CD4-positive, alpha-beta T cell (primary cell): ENCODE measurements at regions of chr21 and their contacts with region 1.

Region 1: GRCh38 chr21:15729674-15730483 is at the start of gene USP25:
- DNase-seq: peak; percentile 81 to 94 (median 89)
- ATAC-seq: peak; percentile 81
- H3K4me3 ChIP-seq: peak within 1 kb of the TSS; percentile 77
- H3K4me3 Mint-ChIP-seq: peak within 1 kb of the TSS; percentile 98
- H3K27ac ChIP-seq: peak within 1 kb of the TSS; percentile 50 to 71
- H3K27ac Mint-ChIP-seq: peak within 1 kb of the TSS; percentile 85
- H3K4me1 ChIP-seq: peaks cover 20% of the 10 kb centered on the region
- H3K4me1 Mint-ChIP-seq: peaks cover 39% of the 10 kb centered on the region
- H3K27me3 ChIP-seq: no peaks in the 10 kb centered on the region
- H3K27me3 Mint-ChIP-seq: peaks cover 4% of the 10 kb centered on the region
- CTCF ChIP-seq: no peak
- total RNA-seq, gene USP25: 45.0 to 49.2 TPM

Region 2: DNA sequence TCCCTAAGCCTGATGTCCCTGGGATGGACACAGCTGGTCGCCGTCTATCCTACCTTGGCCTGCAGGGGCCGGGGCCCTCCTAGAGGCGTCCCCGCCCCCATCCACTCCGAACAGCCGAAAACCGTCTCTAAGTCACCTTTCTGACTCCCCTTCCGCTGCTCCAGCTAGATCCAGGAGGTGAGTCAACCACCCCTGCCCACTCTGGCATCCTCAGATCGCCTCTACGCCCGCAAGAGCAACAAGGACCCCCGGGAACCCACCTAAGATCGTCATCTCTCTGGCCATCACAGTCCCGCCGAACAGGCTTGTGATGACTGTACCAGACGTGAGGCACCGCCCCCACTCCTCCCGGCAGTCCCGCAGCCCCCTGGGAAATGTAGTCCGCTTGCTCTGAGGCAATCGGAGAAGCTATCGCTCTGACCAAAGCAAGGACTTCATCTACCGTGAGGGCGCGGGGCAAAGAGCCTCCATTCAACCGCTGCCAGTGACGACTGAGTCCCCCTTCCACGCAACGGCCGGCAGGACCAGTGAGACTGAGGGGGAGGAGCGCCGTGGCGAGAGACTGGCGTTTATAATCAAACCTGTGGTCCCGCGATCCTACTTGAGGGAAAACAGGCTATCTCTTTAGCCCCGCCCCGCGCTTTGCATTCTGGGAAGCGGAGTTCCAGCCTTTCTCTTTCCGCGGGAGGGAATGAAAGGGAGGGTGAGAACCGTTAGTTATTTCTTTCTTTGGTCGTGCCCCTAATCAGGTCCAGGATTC is 1346.9 kb before region 1 on chr21 and contains the start of gene HSPA13:
- CTCF ChIA-PET with region 1: interaction called, 3 read pairs
- POLR2A ChIA-PET with region 1: interaction called, 6 read pairs
- intact Hi-C with region 1: loop called (anchors 5 kb)
- DNase-seq: peak; percentile 95 to 100 (median 98)
- ATAC-seq: peak; percentile 93
- H3K4me3 ChIP-seq: peak within 1 kb of the TSS; percentile 80
- H3K4me3 Mint-ChIP-seq: peak within 1 kb of the TSS; percentile 96
- H3K27ac ChIP-seq: peak within 1 kb of the TSS; percentile 86
- H3K27ac Mint-ChIP-seq: peak within 1 kb of the TSS; percentile 97
- H3K4me1 ChIP-seq: peaks cover 17% of the 10 kb centered on the region
- H3K4me1 Mint-ChIP-seq: peaks cover 44% of the 10 kb centered on the region
- H3K27me3 ChIP-seq: no peaks in the 10 kb centered on the region
- H3K27me3 Mint-ChIP-seq: no peaks in the 10 kb centered on the region
- CTCF ChIP-seq: no peak
- total RNA-seq, gene HSPA13: 39.6 to 41.4 TPM

Region 3: DNA sequence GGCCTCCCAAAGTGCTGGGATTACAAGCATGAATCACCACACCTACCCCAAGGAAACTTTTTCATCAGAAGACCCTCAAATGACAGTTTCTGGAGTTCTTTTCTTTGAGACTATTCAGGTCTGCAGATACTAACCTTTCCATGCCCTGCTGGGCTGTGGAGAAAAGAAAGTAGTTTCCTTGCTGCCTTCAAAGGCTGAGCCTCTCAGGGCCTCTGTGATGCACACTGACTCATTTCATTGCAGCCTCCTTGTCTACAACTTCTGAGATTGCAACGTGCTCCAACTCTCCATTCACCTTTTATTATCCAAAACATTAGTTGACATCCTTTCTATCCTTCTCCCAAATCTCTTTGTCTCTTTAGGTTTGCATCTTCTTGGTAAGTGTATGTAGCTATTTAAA is 1174.9 kb before region 1 on chr21:
- CTCF ChIA-PET with region 1: no interaction called
- POLR2A ChIA-PET with region 1: no interaction called
- intact Hi-C with region 1: loop called in 1 of 2 experiments (anchors 10 kb)
- DNase-seq: peak in 5 of 14 experiments; percentile 3 to 57 (median 28)
- ATAC-seq: no peak
- H3K4me3 ChIP-seq: no peak overlapping the region
- H3K4me3 Mint-ChIP-seq: no peak overlapping the region
- H3K27ac ChIP-seq: no peak overlapping the region
- H3K27ac Mint-ChIP-seq: peak overlapping the region; percentile 5
- H3K4me1 ChIP-seq: peaks cover 11% of the 10 kb centered on the region
- H3K4me1 Mint-ChIP-seq: peaks cover 41% of the 10 kb centered on the region
- H3K27me3 ChIP-seq: no peaks in the 10 kb centered on the region
- H3K27me3 Mint-ChIP-seq: no peaks in the 10 kb centered on the region
- CTCF ChIP-seq: no peak

Region 4: GRCh38 chr21:15064576-15065391 is 665.1 kb before region 1 on chr21 and contains the start of gene NRIP1:
- CTCF ChIA-PET with region 1: no interaction called
- POLR2A ChIA-PET with region 1: interaction called, 6 read pairs
- intact Hi-C with region 1: loop called in 1 of 2 experiments (anchors 5 kb)
- DNase-seq: peak; percentile 72 to 93 (median 82)
- ATAC-seq: peak; percentile 76
- H3K4me3 ChIP-seq: peak within 1 kb of the TSS; percentile 91
- H3K4me3 Mint-ChIP-seq: peak within 1 kb of the TSS; percentile 97
- H3K27ac ChIP-seq: peak within 1 kb of the TSS; percentile 79 to 84
- H3K27ac Mint-ChIP-seq: peak within 1 kb of the TSS; percentile 98
- H3K4me1 ChIP-seq: peaks cover 13% of the 10 kb centered on the region
- H3K4me1 Mint-ChIP-seq: peaks cover 50% of the 10 kb centered on the region
- H3K27me3 ChIP-seq: no peaks in the 10 kb centered on the region
- H3K27me3 Mint-ChIP-seq: peaks cover 5% of the 10 kb centered on the region
- CTCF ChIP-seq: no peak
- total RNA-seq, gene NRIP1: 41.6 to 50.1 TPM

Region 5: DNA sequence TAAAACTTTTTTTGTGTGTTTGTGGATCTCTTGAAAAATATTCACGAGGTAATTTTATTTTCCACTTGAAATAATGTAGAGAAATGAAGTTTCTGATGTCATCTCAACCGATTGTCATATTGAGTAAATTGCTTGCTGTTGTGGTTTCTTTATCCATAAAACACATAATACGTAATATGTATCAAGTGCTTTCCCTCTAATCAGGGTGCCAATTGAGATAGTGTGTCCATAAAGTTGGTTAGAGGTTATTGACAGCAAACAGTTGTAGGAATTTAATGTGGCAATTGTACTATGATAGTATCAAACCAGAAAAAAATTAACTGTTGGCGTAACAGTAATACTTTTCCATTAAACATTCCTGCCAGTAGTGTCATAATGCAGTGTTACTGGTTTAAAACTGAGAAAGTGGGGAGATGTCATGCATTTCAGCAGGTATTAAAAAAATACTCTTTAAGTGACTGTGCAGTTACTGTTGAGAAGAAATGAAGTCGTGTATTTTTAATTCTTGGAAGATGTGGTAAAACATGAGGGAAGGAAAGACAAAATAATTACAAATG is 38.2 kb after region 1 on chr21:
- CTCF ChIA-PET with region 1: no interaction called
- POLR2A ChIA-PET with region 1: interaction called, 3 read pairs
- intact Hi-C with region 1: loop called in 1 of 2 experiments (anchors 5 kb)
- DNase-seq: no peak
- ATAC-seq: no peak
- H3K4me3 ChIP-seq: no peak overlapping the region
- H3K4me3 Mint-ChIP-seq: no peak overlapping the region
- H3K27ac ChIP-seq: no peak overlapping the region
- H3K27ac Mint-ChIP-seq: no peak overlapping the region
- H3K4me1 ChIP-seq: no peaks in the 10 kb centered on the region
- H3K4me1 Mint-ChIP-seq: peaks cover 72% of the 10 kb centered on the region
- H3K27me3 ChIP-seq: no peaks in the 10 kb centered on the region
- H3K27me3 Mint-ChIP-seq: no peaks in the 10 kb centered on the region
- CTCF ChIP-seq: no peak

Region 6: DNA sequence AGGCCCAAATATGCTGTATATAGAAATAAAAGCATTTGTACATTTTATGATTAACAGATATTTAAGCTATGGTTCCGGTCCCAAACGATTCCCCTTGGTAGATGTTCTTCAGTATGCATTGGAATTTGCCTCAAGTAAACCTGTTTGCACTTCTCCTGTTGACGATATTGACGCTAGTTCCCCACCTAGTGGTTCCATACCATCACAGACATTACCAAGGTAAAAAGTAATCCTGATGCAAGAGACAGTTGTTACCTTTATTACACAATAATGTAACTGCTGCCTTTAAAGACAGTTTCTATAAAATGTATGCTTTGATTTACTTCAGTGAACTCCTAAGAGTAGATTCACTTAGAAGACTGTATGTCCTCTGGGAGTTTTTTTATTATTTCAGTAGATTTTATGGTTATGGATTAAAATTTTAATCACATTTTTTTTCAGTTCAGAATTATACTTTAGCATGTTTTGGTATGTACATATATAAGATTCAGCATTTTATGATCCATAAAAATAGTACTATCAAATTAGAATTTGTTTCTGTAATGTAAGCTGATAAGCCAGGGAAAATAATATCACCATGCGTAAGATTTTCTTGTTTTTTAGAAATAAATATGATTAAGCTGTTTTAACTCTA is 96.4 kb after region 1 on chr21:
- CTCF ChIA-PET with region 1: interaction called, 4 read pairs
- POLR2A ChIA-PET with region 1: interaction called, 7 read pairs
- intact Hi-C with region 1: loop called in 1 of 2 experiments (anchors 2 kb)
- DNase-seq: peak in 6 of 14 experiments; percentile 9 to 74 (median 58)
- ATAC-seq: peak; percentile 65
- H3K4me3 ChIP-seq: no peak overlapping the region
- H3K4me3 Mint-ChIP-seq: peak overlapping the region; percentile 12
- H3K27ac ChIP-seq: no peak overlapping the region
- H3K27ac Mint-ChIP-seq: peak overlapping the region; percentile 33
- H3K4me1 ChIP-seq: peaks cover 7% of the 10 kb centered on the region
- H3K4me1 Mint-ChIP-seq: peaks cover 42% of the 10 kb centered on the region
- H3K27me3 ChIP-seq: no peaks in the 10 kb centered on the region
- H3K27me3 Mint-ChIP-seq: no peaks in the 10 kb centered on the region
- CTCF ChIP-seq: peak; percentile 82